Activated CD8-positive, alpha-beta T cell treated with anti-CD3 and anti-CD28 coated beads for 36 hours (primary cell): ENCODE measurements at regions of chr12 and their contacts with region 1.

Region 1: DNA sequence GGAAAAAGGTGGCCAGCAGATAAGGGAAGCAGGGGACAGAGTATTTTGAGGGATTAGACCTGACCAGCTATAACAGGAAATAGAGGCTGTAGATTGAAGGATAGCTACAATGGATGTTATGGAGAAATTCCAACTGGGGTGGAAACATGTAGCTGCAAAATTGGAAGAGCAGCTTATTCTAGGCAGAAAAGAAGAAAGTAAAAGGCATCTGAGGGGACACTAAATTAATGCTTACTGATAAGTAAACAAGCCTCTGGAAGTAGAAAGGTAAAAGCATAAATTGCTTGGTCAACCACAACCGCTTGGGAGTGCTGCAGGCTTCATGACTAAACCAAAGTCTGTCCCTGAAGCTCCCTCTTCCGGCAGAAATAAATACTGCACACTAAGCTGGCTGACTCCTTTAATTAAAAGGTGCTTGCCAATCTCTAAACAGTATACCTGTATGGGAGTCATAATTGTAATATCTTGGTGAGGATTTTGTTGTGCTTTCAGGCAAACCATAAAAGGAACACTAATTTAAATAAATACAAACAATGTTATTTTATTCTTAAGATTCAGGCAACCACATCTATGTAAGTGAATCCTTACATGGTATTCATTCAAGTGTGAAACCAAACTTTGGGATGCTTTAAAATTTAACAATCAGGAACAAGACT is 7.7 kb downstream of the UBC start:
- DNase-seq: peak; percentile 97
- ATAC-seq: peak; percentile 94
- H3K4me3 Mint-ChIP-seq: no peak overlapping the region
- H3K27ac Mint-ChIP-seq: peak overlapping the region; percentile 69
- H3K4me1 Mint-ChIP-seq: peaks cover 23% of the 10 kb centered on the region
- H3K27me3 Mint-ChIP-seq: no peaks in the 10 kb centered on the region
- CTCF ChIP-seq: peak; percentile 99

Region 2: GRCh38 chr12:124863416-124864325 is 43.1 kb before region 1 on chr12 and contains the start of gene SCARB1:
- CTCF ChIA-PET with region 1: interaction called, 10 read pairs
- POLR2A ChIA-PET with region 1: interaction called, 3 read pairs
- intact Hi-C with region 1: no loop called
- DNase-seq: peak; percentile 84
- ATAC-seq: peak; percentile 91
- H3K4me3 Mint-ChIP-seq: peak within 1 kb of the TSS; percentile 85
- H3K27ac Mint-ChIP-seq: peak within 1 kb of the TSS; percentile 93
- H3K4me1 Mint-ChIP-seq: peaks cover 25% of the 10 kb centered on the region
- H3K27me3 Mint-ChIP-seq: peaks cover 4% of the 10 kb centered on the region
- CTCF ChIP-seq: no peak
- total RNA-seq, gene SCARB1: 36.2 to 38.1 TPM

Region 3: GRCh38 chr12:124888260-124888659 is 18.5 kb before region 1 on chr12:
- CTCF ChIA-PET with region 1: interaction called, 24 read pairs
- POLR2A ChIA-PET with region 1: no interaction called
- intact Hi-C with region 1: no loop called
- DNase-seq: no peak
- ATAC-seq: no peak
- H3K4me3 Mint-ChIP-seq: no peak overlapping the region
- H3K27ac Mint-ChIP-seq: no peak overlapping the region
- H3K4me1 Mint-ChIP-seq: peaks cover 3% of the 10 kb centered on the region
- H3K27me3 Mint-ChIP-seq: no peaks in the 10 kb centered on the region
- CTCF ChIP-seq: no peak

Region 4: GRCh38 chr12:124917135-124917840 is 10.6 kb after region 1 on chr12:
- CTCF ChIA-PET with region 1: interaction called, 48 read pairs
- POLR2A ChIA-PET with region 1: interaction called, 39 read pairs
- intact Hi-C with region 1: no loop called
- DNase-seq: peak; percentile 97
- ATAC-seq: peak; percentile 69
- H3K4me3 Mint-ChIP-seq: peak overlapping the region; percentile 100
- H3K27ac Mint-ChIP-seq: peak overlapping the region; percentile 100
- H3K4me1 Mint-ChIP-seq: peaks cover 83% of the 10 kb centered on the region
- H3K27me3 Mint-ChIP-seq: no peaks in the 10 kb centered on the region
- CTCF ChIP-seq: no peak

Region 5: DNA sequence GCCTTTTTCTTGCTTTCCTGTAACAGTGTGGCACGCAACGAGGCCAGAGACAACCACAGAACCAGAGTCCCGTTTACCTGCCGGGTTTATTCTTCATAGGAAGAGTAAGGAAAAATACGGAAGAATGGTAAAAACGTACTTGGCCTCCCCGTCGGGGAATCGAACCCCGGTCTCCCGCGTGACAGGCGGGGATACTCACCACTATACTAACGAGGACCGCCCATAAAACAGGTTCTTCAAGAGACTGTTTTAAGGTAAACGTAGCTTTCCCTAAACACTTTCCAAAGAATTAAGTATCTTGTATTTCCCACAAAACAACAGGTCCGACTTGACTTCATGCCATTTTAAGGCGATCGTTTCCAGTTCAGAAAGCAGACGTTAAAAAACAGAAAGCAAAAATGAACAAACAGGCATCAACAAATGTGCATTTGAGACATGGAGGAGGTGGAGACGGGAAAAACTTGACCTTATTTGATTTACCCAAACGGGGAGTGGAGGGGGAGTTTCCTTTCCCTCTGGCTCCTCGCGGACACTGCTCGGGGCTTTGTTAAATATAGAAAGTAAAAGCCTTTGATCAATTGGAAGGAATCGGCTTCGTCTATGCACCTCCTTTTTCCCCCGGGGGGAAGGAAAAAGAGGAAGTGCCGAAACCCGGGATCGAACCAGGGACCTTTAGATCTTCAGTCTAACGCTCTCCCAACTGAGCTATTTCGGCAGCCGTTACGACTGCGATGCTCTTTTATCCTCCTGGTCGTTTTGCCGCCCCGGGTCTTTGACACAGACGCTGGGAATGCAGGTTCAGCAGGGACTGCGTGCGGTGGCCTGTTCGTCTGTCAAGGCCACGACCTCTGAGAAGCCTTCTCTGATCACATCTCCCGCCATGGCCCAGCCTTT is 20.7 kb after region 1 on chr12:
- CTCF ChIA-PET with region 1: interaction called, 18 read pairs
- POLR2A ChIA-PET with region 1: interaction called, 39 read pairs
- intact Hi-C with region 1: no loop called
- DNase-seq: peak; percentile 96
- ATAC-seq: peak; percentile 83
- H3K4me3 Mint-ChIP-seq: peak overlapping the region; percentile 95
- H3K27ac Mint-ChIP-seq: peak overlapping the region; percentile 98
- H3K4me1 Mint-ChIP-seq: peaks cover 50% of the 10 kb centered on the region
- H3K27me3 Mint-ChIP-seq: peaks cover 5% of the 10 kb centered on the region
- CTCF ChIP-seq: no peak

Region 6: GRCh38 chr12:124940549-124941527 is 34.1 kb after region 1 on chr12:
- CTCF ChIA-PET with region 1: interaction called, 153 read pairs
- POLR2A ChIA-PET with region 1: interaction called, 33 read pairs
- intact Hi-C with region 1: loop called (anchors 5 kb)
- DNase-seq: peak; percentile 94
- ATAC-seq: peak; percentile 41
- H3K4me3 Mint-ChIP-seq: no peak overlapping the region
- H3K27ac Mint-ChIP-seq: no peak overlapping the region
- H3K4me1 Mint-ChIP-seq: peaks cover 12% of the 10 kb centered on the region
- H3K27me3 Mint-ChIP-seq: no peaks in the 10 kb centered on the region
- CTCF ChIP-seq: peak; percentile 93

Region 7: GRCh38 chr12:124946447-124946793 is 39.7 kb after region 1 on chr12:
- CTCF ChIA-PET with region 1: interaction called, 153 read pairs
- POLR2A ChIA-PET with region 1: interaction called, 33 read pairs
- intact Hi-C with region 1: loop called (anchors 5 kb)
- DNase-seq: no peak
- ATAC-seq: no peak
- H3K4me3 Mint-ChIP-seq: no peak overlapping the region
- H3K27ac Mint-ChIP-seq: no peak overlapping the region
- H3K4me1 Mint-ChIP-seq: no peaks in the 10 kb centered on the region
- H3K27me3 Mint-ChIP-seq: no peaks in the 10 kb centered on the region
- CTCF ChIP-seq: no peak

Region 8: DNA sequence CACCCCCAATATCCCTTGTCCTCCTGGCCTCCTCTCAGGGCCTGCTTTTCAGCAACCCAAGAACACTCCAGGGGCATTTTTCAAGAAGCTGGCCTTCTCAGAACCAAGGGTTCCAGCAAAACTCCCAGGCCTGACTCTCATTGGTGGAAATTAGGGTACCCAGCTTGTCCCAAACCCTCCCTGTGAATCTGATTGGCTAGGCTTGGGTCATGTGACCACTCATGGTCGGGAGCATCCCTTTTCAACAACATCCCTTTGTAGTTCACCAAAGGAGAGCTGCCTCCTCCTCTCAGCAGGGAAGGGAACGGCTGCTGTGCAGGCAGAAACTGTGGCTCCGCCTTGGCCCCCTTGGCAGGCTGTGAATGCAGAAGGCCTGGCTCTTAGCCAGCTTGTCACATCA is 252.9 kb after region 1 on chr12:
- CTCF ChIA-PET with region 1: no interaction called
- POLR2A ChIA-PET with region 1: no interaction called
- intact Hi-C with region 1: no loop called
- DNase-seq: no peak
- ATAC-seq: no peak
- H3K4me3 Mint-ChIP-seq: no peak overlapping the region
- H3K27ac Mint-ChIP-seq: no peak overlapping the region
- H3K4me1 Mint-ChIP-seq: no peaks in the 10 kb centered on the region
- H3K27me3 Mint-ChIP-seq: no peaks in the 10 kb centered on the region
- CTCF ChIP-seq: no peak